Astrocyte of the cerebellum (primary cell): ENCODE measurements at regions of chr3 and their contacts with region 1.

Region 1: DNA sequence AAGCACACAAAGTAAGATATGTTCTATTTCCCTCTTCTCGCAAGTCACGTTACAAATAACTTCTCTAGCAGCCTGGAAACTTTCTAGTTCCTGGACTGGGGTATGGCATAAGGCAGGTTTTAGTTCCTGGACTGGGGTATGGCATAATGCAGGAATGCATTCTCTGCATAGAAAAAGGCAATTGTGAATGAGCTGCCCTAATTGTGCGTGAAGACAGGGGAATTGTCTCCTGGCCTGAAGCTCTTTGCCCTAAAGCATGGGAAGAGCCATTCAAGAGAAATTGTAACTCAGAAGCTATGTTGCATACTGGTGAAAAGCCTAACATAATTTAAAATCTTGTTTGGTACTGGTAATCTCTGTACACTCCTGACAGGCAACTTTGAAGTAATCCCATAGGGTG is 54.3 kb upstream of the CBLB start:
- DNase-seq: no peak
- H3K4me3 ChIP-seq: no peak overlapping the region
- CTCF ChIP-seq: no peak

Region 2: GRCh38 chr3:105293441-105293840 is 629.7 kb before region 1 on chr3:
- in situ Hi-C with region 1: no loop called
- DNase-seq: no peak
- H3K4me3 ChIP-seq: no peak overlapping the region
- CTCF ChIP-seq: no peak

Region 3: DNA sequence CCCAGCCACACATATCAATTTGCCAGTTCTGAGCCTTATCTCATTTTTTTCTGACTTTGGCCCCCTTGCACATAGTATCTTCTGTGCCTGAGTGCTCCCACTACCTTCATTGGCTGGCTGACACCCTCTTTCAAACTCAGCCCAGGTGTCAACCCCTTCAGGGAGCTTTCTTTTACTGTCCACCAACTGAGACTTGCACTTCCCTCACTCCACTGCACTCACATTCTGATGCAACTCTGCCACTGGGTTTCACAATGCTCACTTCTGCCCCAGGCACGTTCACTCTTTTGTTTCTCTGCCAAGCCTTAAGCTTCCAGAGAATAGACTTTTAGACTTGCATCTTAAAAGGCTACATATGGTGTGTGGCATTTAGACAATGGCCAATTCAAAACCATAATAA is 47.1 kb after region 1 on chr3:
- in situ Hi-C with region 1: loop called (anchors 5 kb)
- DNase-seq: peak; percentile 13
- H3K4me3 ChIP-seq: no peak overlapping the region
- CTCF ChIP-seq: no peak